Mammary epithelial cell (primary cell): ENCODE measurements at regions of chr1 and their contacts with region 1.

Region 1: GRCh38 chr1:237888143-237888542 is 2.6 kb downstream of the ZP4 start:
- DNase-seq: peak; percentile 90
- H3K4me3 ChIP-seq: no peak overlapping the region
- H3K27ac ChIP-seq: peak overlapping the region; percentile 45
- H3K4me1 ChIP-seq: peaks cover 30% of the 10 kb centered on the region
- H3K27me3 ChIP-seq: no peaks in the 10 kb centered on the region
- CTCF ChIP-seq: no peak

Region 2: DNA sequence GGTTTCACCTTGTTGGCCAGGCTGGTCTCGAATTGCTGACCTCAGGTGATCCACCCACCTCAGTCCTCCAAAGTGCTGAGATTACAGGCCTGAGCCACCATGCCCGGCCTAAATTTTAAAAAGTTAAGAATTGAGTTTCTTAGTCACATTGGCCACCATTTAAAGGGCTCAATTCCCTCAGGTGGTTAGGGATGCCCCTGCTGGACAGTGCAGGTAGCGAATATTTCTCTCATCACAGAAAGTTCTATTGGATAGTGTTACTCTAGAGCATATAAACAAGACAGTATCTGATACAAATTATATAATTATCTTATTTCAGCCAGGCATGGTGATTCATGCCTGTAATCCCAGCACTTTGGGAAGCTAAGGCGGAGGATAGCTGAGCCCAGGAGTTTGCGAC is 317.6 kb before region 1 on chr1:
- CTCF ChIA-PET with region 1: no interaction called
- dilution Hi-C with region 1: no loop called
- in situ Hi-C with region 1: no loop called
- intact Hi-C with region 1: no loop called
- DNase-seq: no peak
- H3K4me3 ChIP-seq: no peak overlapping the region
- H3K27ac ChIP-seq: no peak overlapping the region
- H3K4me1 ChIP-seq: no peaks in the 10 kb centered on the region
- H3K27me3 ChIP-seq: no peaks in the 10 kb centered on the region
- CTCF ChIP-seq: peak in 1 of 2 donors; percentile 11

Region 3: DNA sequence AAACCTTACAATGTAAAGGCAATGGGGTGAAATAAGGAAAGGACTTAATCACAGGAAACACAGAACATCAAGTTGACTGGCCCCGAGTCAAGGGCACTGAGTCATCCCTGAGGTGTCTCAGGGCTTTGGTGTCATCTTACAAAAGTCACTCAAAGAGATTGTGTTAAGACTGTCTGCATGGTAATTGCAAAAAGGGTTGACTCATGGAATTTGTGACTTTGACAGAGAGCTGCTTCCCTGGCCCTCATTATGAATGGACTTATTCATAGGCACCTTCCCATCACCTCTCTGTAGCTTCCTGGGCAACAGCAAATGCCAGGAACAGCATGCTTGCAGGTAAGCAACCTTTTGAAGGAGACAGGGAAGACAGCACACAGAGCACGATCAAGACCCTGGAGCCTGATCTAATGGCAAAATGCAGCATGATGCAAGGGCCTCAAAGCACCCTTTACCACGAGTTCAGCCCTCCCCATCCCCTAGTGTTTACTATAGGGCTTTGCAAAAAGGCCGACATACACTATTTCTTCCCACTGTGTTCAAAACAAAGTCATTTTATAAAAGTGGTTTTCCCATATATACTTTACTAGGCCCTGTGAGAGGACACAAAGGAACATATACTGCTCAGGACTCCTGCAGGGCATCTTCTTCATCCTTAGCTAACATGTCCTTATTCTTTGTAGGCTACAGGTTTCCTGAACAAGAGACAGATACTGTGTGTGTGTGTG is 14.5 kb before region 1 on chr1:
- CTCF ChIA-PET with region 1: interaction called, 3 read pairs
- dilution Hi-C with region 1: no loop called
- in situ Hi-C with region 1: no loop called
- intact Hi-C with region 1: loop called (anchors 1 kb)
- DNase-seq: peak; percentile 98
- H3K4me3 ChIP-seq: no peak overlapping the region
- H3K27ac ChIP-seq: peak overlapping the region; percentile 78
- H3K4me1 ChIP-seq: peaks cover 34% of the 10 kb centered on the region
- H3K27me3 ChIP-seq: no peaks in the 10 kb centered on the region
- CTCF ChIP-seq: no peak

Region 4: DNA sequence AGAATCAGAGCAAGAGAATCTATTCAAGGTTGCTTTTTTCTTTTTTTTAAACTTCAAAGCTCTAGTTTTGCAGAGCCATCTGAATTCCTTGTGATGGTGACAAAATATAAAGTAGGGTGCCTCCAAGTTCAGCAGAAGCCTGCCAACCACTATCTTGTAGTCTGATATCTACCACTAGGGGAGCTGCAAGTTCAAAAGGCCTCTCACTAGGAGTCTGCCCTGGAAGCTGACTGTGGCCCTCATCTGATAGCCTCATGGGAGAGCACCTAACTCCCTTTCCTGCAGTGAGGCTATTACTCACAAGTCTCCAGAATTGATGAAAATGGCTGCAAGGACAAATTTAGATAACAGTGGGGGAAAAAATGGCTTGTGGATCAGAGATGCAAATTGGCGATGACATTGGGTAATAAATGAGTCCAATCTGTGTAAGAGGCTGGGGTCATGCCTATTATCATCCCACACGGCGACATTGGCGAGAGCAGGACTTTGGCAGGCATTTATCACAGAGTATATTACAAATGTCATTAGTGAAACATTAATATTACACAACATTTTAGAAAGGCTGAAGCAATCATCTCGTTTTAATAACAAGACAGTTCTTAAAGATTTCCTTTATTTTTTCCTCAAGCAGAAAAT is 13.3 kb after region 1 on chr1:
- CTCF ChIA-PET with region 1: interaction called, 14 read pairs
- dilution Hi-C with region 1: no loop called
- in situ Hi-C with region 1: no loop called
- intact Hi-C with region 1: no loop called
- DNase-seq: peak; percentile 48
- H3K4me3 ChIP-seq: no peak overlapping the region
- H3K27ac ChIP-seq: no peak overlapping the region
- H3K4me1 ChIP-seq: no peaks in the 10 kb centered on the region
- H3K27me3 ChIP-seq: no peaks in the 10 kb centered on the region
- CTCF ChIP-seq: peak; percentile 68 to 72

Region 5: DNA sequence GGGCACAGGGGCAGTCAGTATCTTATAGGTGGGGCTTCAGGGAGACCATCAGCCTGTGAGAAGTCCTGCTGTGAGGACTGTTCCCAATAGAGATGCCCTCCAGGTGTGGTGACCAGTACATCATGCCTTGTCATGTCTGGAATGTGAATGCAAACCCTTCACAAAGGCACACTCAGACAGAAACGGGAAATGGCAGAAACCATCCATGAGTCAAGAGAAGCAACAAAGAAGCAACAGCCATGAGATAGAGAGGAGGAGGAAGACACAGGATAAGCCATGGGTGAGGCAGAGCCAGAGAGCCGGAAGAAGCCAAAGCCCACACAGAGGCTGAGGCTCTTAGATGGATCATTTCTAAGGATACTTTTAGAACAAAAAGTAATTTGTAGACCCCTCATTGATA is 22.7 kb after region 1 on chr1:
- CTCF ChIA-PET with region 1: no interaction called
- dilution Hi-C with region 1: no loop called
- in situ Hi-C with region 1: no loop called
- intact Hi-C with region 1: loop called (anchors 1 kb)
- DNase-seq: peak; percentile 88
- H3K4me3 ChIP-seq: no peak overlapping the region
- H3K27ac ChIP-seq: peak overlapping the region; percentile 63
- H3K4me1 ChIP-seq: peaks cover 13% of the 10 kb centered on the region
- H3K27me3 ChIP-seq: no peaks in the 10 kb centered on the region
- CTCF ChIP-seq: no peak